Activated CD4-positive, alpha-beta T cell treated with anti-CD3 and anti-CD28 coated beads, Interleukin-2, amount 10 ng/mL, durations not matched to agents 7 days and 5 days (primary cell): ENCODE measurements at regions of chr1 and their contacts with region 1.

Region 1: GRCh38 chr1:61043010-61043820 is 39.1 kb upstream of the NFIA start:
- DNase-seq: peak; percentile 85
- H3K4me3 Mint-ChIP-seq: peak overlapping the region; percentile 62
- H3K27ac Mint-ChIP-seq: no peak overlapping the region
- H3K4me1 Mint-ChIP-seq: peaks cover 13% of the 10 kb centered on the region
- H3K27me3 Mint-ChIP-seq: peaks cover 43% of the 10 kb centered on the region

Region 2: GRCh38 chr1:60978421-60979357 is 64.5 kb before region 1 on chr1:
- CTCF ChIA-PET with region 1: interaction called, 10 read pairs
- POLR2A ChIA-PET with region 1: no interaction called
- DNase-seq: peak; percentile 20
- H3K4me3 Mint-ChIP-seq: no peak overlapping the region
- H3K27ac Mint-ChIP-seq: no peak overlapping the region
- H3K4me1 Mint-ChIP-seq: no peaks in the 10 kb centered on the region
- H3K27me3 Mint-ChIP-seq: peaks cover 3% of the 10 kb centered on the region

Region 3: GRCh38 chr1:61132176-61133001 is 89.2 kb after region 1 on chr1:
- CTCF ChIA-PET with region 1: no interaction called
- POLR2A ChIA-PET with region 1: no interaction called
- DNase-seq: no peak
- H3K4me3 Mint-ChIP-seq: no peak overlapping the region
- H3K27ac Mint-ChIP-seq: no peak overlapping the region
- H3K4me1 Mint-ChIP-seq: peaks cover 6% of the 10 kb centered on the region
- H3K27me3 Mint-ChIP-seq: peaks cover 4% of the 10 kb centered on the region